B cell (primary cell): ENCODE measurements at regions of chr1 and their contacts with region 1.

Region 1: DNA sequence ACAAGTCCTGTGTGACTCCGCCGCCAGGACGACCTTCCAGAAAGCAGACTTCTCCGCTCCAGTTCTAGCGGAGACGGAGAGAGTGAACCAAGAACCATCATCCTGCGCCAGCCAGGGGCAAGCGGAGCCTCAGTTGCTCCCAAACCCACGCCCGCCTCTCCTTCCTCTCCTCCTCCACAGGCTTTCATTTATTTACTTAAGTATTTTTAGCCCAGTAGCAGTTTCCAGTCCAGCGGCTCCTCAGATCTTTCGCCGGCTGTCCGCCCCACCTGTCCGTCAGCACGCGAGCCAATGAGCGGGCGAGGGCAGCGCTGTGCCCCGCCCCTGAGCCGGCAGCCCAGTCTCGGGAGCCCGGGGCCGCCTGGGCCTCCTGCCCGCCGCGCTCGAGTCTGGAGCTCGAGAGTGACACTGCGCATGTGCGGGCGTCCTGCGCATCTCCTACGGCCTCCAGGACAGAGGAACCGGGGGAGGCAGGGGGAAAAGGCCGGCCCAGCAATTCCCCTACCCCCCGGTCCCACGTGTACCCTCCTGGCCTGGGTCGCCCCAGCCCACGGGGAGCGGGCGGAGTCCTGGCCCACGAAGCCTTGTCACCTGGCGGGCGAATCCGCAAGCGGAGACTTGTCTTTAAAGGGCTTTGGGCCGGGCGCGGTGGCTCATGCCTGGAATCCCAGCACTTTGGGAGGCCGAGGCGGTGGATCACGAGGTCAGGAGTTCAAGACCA is at the start of gene FALEC:
- DNase-seq: peak; percentile 94
- ATAC-seq: peak; percentile 99
- H3K4me3 ChIP-seq: peak within 1 kb of the TSS; percentile 50 to 86 (median 80)
- H3K4me3 Mint-ChIP-seq: peak within 1 kb of the TSS; percentile 90
- H3K27ac ChIP-seq: peak within 1 kb of the TSS; percentile 59 to 78
- H3K27ac Mint-ChIP-seq: peak within 1 kb of the TSS; percentile 83
- H3K4me1 ChIP-seq: peaks cover 22 to 26% of the 10 kb centered on the region in 2 donors
- H3K4me1 Mint-ChIP-seq: peaks cover 25% of the 10 kb centered on the region
- H3K27me3 ChIP-seq: no peaks in the 10 kb centered on the region
- H3K27me3 Mint-ChIP-seq: no peaks in the 10 kb centered on the region
- CTCF ChIP-seq: no peak
- total RNA-seq, gene FALEC: 2.0 and 2.6 TPM in 2 replicates

Region 2: GRCh38 chr1:150259758-150260669 is 255.5 kb before region 1 on chr1:
- CTCF ChIA-PET with region 1: interaction called, 7 read pairs
- POLR2A ChIA-PET with region 1: no interaction called
- intact Hi-C with region 1: loop called (anchors 2 kb)
- DNase-seq: no peak
- ATAC-seq: no peak
- H3K4me3 ChIP-seq: no peak overlapping the region
- H3K4me3 Mint-ChIP-seq: no peak overlapping the region
- H3K27ac ChIP-seq: no peak overlapping the region
- H3K27ac Mint-ChIP-seq: no peak overlapping the region
- H3K4me1 ChIP-seq: peaks cover 14 to 15% of the 10 kb centered on the region in 2 donors
- H3K4me1 Mint-ChIP-seq: peaks cover 13% of the 10 kb centered on the region
- H3K27me3 ChIP-seq: peaks cover 0 to 36% (median 24%) of the 10 kb centered on the region in 4 experiments
- H3K27me3 Mint-ChIP-seq: peaks cover 40% of the 10 kb centered on the region
- CTCF ChIP-seq: no peak

Region 3: DNA sequence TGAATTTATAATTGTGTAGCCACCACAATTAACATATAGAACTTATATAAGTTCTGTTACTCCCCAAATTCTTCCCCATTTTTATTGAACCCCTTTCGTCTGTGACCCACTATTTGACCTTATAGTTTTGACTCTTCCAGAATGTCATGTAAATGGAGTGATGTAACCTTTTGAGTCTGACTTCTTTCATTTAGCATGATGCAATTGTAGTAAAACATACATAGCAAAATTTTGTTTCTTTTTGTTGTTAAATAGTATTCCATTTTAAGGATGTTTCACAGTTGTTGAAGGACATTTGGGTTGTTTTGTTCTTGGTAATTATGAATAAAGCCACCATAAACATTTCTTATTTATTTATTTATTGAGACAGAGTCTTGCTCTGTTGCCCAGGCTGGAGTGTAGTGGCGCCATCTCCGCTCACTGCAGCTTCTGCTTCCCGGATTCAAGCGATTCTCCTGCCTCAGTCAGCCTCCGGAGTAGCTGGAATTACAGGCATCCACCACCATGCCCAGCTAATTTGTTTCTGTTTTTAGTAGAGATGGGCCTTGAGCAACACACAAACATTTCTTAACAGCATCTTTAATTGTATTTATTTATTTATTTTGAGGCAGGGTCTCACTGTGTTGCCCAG is 118.0 kb before region 1 on chr1:
- CTCF ChIA-PET with region 1: no interaction called
- POLR2A ChIA-PET with region 1: no interaction called
- intact Hi-C with region 1: no loop called
- DNase-seq: no peak
- ATAC-seq: no peak
- H3K4me3 ChIP-seq: no peak overlapping the region
- H3K4me3 Mint-ChIP-seq: no peak overlapping the region
- H3K27ac ChIP-seq: no peak overlapping the region
- H3K27ac Mint-ChIP-seq: no peak overlapping the region
- H3K4me1 ChIP-seq: no peaks in the 10 kb centered on the region
- H3K4me1 Mint-ChIP-seq: peaks cover 28% of the 10 kb centered on the region
- H3K27me3 ChIP-seq: no peaks in the 10 kb centered on the region
- H3K27me3 Mint-ChIP-seq: no peaks in the 10 kb centered on the region
- CTCF ChIP-seq: no peak

Region 4: DNA sequence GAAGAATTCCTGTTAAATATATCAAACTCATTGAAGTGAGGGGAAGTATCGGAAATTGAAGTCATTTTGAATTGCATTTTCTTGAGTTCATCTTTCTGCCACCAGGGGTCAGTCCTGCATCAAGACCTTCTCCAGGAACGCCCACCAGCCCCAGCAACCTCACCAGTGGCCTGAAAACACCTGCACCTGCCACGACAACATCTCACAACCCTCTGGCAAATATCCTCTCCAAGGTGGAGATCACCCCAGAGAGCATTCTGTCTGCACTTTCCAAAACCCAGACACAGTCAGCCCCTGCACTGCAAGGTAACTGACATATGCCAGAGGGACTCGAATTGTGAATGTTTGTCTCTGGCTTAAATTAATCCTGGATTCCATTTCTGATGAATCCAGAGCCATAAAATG is 51.1 kb before region 1 on chr1:
- CTCF ChIA-PET with region 1: interaction called, 3 read pairs
- POLR2A ChIA-PET with region 1: no interaction called
- intact Hi-C with region 1: loop called (anchors 1 kb)
- DNase-seq: peak; percentile 83
- ATAC-seq: peak; percentile 74
- H3K4me3 ChIP-seq: no peak overlapping the region
- H3K4me3 Mint-ChIP-seq: no peak overlapping the region
- H3K27ac ChIP-seq: no peak overlapping the region
- H3K27ac Mint-ChIP-seq: peak overlapping the region; percentile 5
- H3K4me1 ChIP-seq: peaks cover 0 to 3% of the 10 kb centered on the region in 2 donors
- H3K4me1 Mint-ChIP-seq: peaks cover 4% of the 10 kb centered on the region
- H3K27me3 ChIP-seq: no peaks in the 10 kb centered on the region
- H3K27me3 Mint-ChIP-seq: no peaks in the 10 kb centered on the region
- CTCF ChIP-seq: peak; percentile 82

Region 5: DNA sequence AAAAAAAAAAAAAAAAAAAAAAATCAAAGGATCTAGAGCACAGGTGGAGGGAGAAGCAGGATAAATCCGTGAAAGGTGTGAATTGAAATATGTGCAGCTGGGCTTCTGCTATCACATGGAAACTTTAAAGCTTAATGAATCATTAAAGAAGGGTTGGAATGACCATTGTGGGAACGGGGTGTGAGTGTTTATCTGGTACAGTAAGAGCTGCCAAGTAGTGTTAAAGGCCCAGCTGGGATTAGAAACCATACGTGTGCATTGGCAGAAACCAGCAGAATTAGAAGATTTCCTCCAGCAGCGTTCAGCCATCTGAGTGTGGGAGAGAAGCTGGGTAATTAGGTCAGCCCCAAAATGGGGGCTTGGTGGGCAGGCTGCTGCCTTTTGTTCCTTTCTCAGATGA is 13.5 kb after region 1 on chr1:
- CTCF ChIA-PET with region 1: interaction called, 10 read pairs
- POLR2A ChIA-PET with region 1: no interaction called
- intact Hi-C with region 1: no loop called
- DNase-seq: no peak
- ATAC-seq: no peak
- H3K4me3 ChIP-seq: no peak overlapping the region
- H3K4me3 Mint-ChIP-seq: no peak overlapping the region
- H3K27ac ChIP-seq: no peak overlapping the region
- H3K27ac Mint-ChIP-seq: no peak overlapping the region
- H3K4me1 ChIP-seq: no peaks in the 10 kb centered on the region
- H3K4me1 Mint-ChIP-seq: no peaks in the 10 kb centered on the region
- H3K27me3 ChIP-seq: no peaks in the 10 kb centered on the region
- H3K27me3 Mint-ChIP-seq: no peaks in the 10 kb centered on the region
- CTCF ChIP-seq: no peak

Region 6: DNA sequence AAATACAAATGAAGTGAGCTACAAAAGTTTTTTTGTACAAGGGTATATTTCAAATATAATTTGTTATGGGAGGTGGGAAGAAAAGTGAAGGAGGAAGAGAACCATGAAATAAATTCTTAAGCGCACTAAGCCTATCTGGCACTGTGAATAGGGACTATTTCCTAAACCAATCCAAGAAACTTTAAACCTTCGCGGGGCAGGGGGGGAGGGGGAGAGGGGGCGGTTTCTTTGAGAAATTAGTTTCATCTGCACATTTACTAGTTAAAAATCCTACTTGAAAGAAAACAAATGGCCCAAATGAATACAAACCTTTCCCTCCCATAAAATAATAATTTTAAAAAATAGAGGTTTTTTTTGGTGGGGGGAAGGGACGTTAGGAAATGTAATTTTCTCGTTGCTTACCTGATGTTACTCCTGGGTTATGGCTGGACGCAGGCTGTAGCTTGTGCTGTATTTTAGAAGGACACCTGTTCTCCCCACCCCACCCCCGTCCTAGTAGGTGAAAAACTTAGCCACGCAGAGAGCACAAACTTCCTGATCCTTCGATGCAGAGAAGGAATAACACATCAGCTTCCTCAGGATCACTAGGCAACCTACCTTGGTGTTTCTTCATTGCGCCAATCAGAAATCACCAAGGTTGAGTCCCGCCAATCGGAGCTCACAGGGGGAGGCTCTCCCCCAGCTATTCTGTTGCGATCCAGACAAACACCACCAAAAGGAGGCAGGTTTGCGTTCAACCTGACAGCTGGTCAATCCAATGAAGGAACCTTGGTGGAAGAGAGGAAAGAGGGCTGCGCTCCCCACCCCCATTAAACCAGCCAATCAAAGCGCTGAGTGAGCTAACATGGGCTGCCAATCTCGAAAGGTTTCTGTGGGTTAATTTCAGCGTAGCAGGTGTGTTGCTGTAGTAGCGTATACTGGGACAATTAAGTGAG is 181.4 kb after region 1 on chr1 and contains the start of gene GOLPH3L:
- CTCF ChIA-PET with region 1: no interaction called
- POLR2A ChIA-PET with region 1: no interaction called
- intact Hi-C with region 1: loop called (anchors 5 kb)
- DNase-seq: peak; percentile 93
- ATAC-seq: peak; percentile 99
- H3K4me3 ChIP-seq: peak within 1 kb of the TSS; percentile 77 to 99 (median 90)
- H3K4me3 Mint-ChIP-seq: peak within 1 kb of the TSS; percentile 100
- H3K27ac ChIP-seq: peak within 1 kb of the TSS; percentile 66 to 78
- H3K27ac Mint-ChIP-seq: peak within 1 kb of the TSS; percentile 97
- H3K4me1 ChIP-seq: peaks cover 4 to 11% of the 10 kb centered on the region in 2 donors
- H3K4me1 Mint-ChIP-seq: peaks cover 19% of the 10 kb centered on the region
- H3K27me3 ChIP-seq: no peaks in the 10 kb centered on the region
- H3K27me3 Mint-ChIP-seq: no peaks in the 10 kb centered on the region
- CTCF ChIP-seq: no peak
- total RNA-seq, gene GOLPH3L: 22.1 and 25.3 TPM in 2 replicates